ENCODE measurements at regions of chr12 and their contacts with region 1.

Region 1: GRCh38 chr12:130633776-130634175 is 82.3 kb downstream of the RIMBP2 start:
- DNase-seq: no peak
- H3K4me3 ChIP-seq: no peak overlapping the region
- H3K27ac ChIP-seq: no peak overlapping the region
- H3K4me1 ChIP-seq: no peaks in the 10 kb centered on the region
- H3K27me3 ChIP-seq: peaks cover 78% of the 10 kb centered on the region
- CTCF ChIP-seq: no peak

Region 2: DNA sequence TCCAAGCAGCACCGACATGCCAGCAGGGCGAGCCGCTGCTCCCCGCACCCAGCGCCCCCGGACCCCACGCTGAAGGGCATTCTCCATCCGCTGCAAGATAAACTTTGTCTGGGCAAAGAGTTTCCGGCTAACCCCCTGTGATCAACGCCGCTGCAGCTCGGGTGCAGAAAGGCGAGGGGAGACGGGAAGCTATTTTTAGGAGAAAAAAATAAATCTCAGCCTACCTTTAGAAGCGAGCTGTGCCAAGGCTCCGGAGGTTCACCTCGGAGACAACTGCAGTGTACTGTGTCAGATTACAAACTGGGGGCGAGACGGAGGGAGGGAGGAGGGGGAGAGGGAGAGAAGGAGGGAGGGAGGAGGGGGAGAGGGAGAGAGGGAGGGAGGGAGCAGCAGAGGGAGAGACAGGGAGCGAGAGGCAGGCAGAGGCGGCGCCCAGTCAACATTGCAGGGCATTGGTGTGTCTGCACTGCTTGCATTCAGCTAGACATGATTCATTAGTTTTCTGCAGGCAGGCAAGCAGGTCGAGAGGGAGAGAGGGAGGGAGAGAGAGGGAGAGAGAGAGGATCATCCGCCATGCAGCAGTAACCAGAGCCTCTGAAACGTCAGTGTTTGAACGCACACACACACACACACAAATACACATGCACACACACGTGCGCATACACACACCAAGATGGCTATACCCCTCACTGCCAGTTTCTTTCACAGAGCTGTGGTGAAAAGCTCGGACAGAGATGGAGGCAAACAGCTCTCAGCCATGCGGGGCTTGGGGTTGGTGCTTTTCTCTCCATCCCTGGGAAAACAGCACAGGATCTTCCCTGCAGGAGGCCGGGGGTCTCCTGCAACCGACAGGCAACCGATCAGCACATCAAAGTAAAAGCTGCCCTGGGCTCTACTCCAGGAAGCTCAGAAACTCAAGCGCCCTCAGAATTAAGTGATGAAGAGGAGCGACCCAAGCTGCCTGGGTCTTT is 82.5 kb after region 1 on chr12 and contains the start of gene RIMBP2:
- CTCF ChIA-PET with region 1: interaction called, 16 read pairs
- POLR2A ChIA-PET with region 1: no interaction called
- intact Hi-C with region 1: no loop called
- DNase-seq: no peak
- H3K4me3 ChIP-seq: no peak within 1 kb of the TSS
- H3K27ac ChIP-seq: no peak within 1 kb of the TSS
- H3K4me1 ChIP-seq: no peaks in the 10 kb centered on the region
- H3K27me3 ChIP-seq: peaks cover 71% of the 10 kb centered on the region
- CTCF ChIP-seq: no peak
- total RNA-seq, gene RIMBP2: not detected in 2 replicates

Measured in PC-9 (cell line).